HepG2 (cell line): ENCODE measurements at regions of chr6 and their contacts with region 1.

Region 1: DNA sequence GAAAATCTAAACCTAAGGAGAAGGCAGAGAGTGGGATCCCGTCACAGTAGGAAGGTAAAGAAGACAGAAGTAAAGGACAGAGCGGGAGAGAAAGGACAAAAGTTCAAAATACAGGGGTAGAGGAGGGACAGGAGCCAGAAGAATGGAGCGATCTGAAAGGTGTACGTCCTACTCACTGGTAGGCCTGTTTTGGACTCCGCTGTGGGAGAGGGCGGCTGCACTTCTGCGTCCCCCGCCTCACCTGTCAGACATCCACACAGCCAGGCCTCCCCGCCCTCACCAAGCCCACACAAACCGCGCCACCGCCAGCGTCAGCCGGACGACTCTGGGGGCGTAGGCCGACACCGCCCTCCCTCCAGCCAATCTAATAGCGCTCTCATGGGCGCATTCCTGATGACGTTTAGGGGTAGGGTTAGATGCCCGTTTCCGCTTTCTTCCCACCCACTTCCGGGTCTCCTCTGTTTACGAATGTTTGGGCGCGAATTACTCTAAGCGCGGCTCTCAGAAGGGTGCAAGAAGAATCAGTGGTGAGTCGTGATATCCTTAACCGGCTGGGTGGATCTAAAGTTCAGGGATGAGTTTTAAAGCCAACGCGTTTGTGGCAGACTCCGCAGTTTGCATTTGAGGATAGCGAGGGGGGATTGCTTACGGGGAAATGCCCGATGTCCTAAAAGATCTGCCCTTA is at the starts of genes CENPQ and MMUT:
- DNase-seq: peak; percentile 98
- ATAC-seq: peak; percentile 100
- H3K4me3 ChIP-seq: peak within 1 kb of the TSS; percentile 83 to 96 (median 91)
- H3K27ac ChIP-seq: peak within 1 kb of the TSS; percentile 85
- H3K4me1 ChIP-seq: peaks cover 36% of the 10 kb centered on the region
- H3K27me3 ChIP-seq: no peaks in the 10 kb centered on the region; a peak in 1 of 5 replicates
- CTCF ChIP-seq: peak; percentile 46
- EP300 ChIP-seq: peak; percentile 72 to 92
- POLR2A ChIP-seq: peak; percentile 84 to 87
- RAD21 ChIP-seq: no peak; the same call in 1 of the 2 replicates
- total RNA-seq, gene CENPQ: 20.1 and 29.4 TPM in 2 replicates
- total RNA-seq, gene MMUT: 15.8 and 20.5 TPM in 2 replicates

Region 2: DNA sequence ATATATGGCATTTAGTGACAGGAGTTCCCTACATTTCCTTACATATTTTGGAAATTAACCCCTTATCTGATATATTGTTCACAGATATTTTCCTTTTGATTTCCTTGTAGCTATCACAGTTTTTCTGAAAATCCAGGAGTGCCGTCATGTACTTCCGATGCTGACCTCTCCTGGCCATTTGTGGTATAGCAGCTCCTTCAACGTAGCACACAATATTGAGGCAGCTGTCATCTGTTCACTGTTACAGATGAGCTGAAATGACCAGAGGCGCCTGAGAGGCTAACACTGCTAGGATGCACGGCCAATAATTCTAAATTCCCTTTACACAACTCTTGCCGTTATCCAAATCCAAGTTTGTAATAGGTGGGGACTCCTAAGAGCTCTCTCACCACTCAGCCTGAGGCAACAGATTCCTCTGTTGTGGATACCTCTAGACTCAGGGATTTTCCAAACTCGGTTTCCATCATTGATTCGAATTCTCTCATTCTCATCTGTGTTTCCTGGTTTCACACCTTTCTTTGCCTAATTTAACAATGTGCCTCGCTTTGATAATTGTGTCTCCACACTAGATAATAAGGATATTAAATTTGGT is 53.0 kb before region 1 on chr6:
- CTCF ChIA-PET with region 1: no interaction called
- POLR2A ChIA-PET with region 1: no interaction called
- in situ Hi-C with region 1: no loop called
- intact Hi-C with region 1: loop called (anchors 1 kb)
- DNase-seq: peak; percentile 59
- ATAC-seq: peak; percentile 97
- H3K4me3 ChIP-seq: no peak overlapping the region
- H3K27ac ChIP-seq: no peak overlapping the region
- H3K4me1 ChIP-seq: no peaks in the 10 kb centered on the region
- H3K27me3 ChIP-seq: no peaks in the 10 kb centered on the region
- CTCF ChIP-seq: peak; percentile 85
- EP300 ChIP-seq: no peak
- POLR2A ChIP-seq: no peak
- RAD21 ChIP-seq: no peak

Region 3: DNA sequence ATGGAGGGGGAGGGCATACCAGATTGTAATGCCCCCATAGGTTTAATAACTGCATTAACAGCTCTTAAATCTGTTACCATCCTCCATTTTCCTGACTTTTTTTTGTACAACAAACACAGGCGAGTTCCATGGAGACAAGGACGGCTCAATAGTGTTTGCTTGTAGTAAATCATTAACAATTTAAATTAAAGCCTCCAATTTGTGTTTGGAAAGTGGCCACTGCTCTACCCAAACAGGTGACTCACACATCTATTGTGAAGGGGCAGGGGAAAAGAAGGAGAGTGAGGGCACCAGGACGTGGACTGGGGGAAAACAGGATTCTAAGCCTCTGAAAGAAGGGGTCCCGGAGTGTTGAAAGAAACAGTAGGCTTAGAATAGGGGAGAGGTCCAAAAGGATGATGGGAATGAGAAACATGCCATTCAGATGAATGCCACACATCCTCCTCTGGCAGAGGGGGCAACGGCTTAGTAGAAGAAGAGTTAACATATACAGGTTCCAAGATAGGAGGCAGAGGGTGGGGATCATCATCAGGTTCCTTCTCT is 43.6 kb after region 1 on chr6:
- CTCF ChIA-PET with region 1: no interaction called
- POLR2A ChIA-PET with region 1: no interaction called
- in situ Hi-C with region 1: no loop called
- intact Hi-C with region 1: loop called (anchors 1 kb)
- DNase-seq: peak; percentile 90
- ATAC-seq: peak; percentile 98
- H3K4me3 ChIP-seq: peak overlapping the region in 1 of 3 experiments; percentile 41; a peak in 3 of 6 replicates
- H3K27ac ChIP-seq: peak overlapping the region; percentile 85
- H3K4me1 ChIP-seq: peaks cover 42% of the 10 kb centered on the region
- H3K27me3 ChIP-seq: no peaks in the 10 kb centered on the region
- CTCF ChIP-seq: no peak
- EP300 ChIP-seq: peak; percentile 9 to 71; a peak in 2 of 4 replicates
- POLR2A ChIP-seq: peak in 1 of 2 experiments; percentile 22; a peak in 1 of 4 replicates
- RAD21 ChIP-seq: no peak

Region 4: GRCh38 chr6:49519660-49520059 is 56.6 kb after region 1 on chr6:
- CTCF ChIA-PET with region 1: no interaction called
- POLR2A ChIA-PET with region 1: no interaction called
- in situ Hi-C with region 1: no loop called
- intact Hi-C with region 1: loop called (anchors 1 kb)
- DNase-seq: no peak
- ATAC-seq: no peak
- H3K4me3 ChIP-seq: no peak overlapping the region
- H3K27ac ChIP-seq: no peak overlapping the region
- H3K4me1 ChIP-seq: peaks cover 57% of the 10 kb centered on the region
- H3K27me3 ChIP-seq: no peaks in the 10 kb centered on the region
- CTCF ChIP-seq: no peak
- EP300 ChIP-seq: no peak
- POLR2A ChIP-seq: no peak
- RAD21 ChIP-seq: no peak

Region 5: DNA sequence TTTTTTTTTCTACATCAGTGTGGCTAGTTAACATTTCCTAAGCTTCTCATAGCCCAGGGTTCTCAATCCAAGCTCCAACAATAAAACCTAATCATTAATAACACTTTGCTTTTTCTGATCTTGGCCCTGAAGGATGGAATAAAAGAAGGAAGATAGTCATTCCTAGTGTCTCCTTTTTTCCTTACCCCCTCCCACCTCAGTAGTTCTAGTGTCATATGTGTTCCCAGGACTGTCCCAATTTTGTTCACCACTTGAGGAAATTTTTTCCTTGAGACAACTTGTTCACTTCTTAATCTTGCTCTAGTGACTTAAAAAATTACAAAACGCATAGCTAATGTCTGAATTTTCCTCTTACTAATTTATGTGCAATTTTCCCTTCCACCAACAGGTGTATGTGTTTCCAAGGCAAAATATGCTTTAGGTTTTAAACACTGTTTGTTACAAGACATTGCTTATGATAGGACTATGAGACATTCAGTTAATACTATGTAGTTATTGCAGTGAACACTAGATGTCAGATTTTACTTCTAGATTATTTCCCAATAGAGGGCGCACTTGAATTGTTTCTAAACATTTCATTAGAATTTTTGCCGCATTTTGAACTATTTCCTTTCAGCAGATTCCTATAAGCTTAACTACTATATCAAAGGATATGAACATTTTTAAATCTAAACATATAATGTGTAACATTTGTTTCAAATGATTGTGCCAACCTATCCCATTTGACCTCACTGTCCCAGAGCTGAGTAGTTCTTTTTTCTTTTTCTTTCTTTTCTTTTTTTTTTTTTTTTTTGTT is 68.9 kb after region 1 on chr6:
- CTCF ChIA-PET with region 1: no interaction called
- POLR2A ChIA-PET with region 1: no interaction called
- in situ Hi-C with region 1: no loop called
- intact Hi-C with region 1: loop called (anchors 2 kb)
- DNase-seq: peak; percentile 72
- ATAC-seq: peak; percentile 98
- H3K4me3 ChIP-seq: peak overlapping the region; percentile 24 to 41 (median 40)
- H3K27ac ChIP-seq: no peak overlapping the region
- H3K4me1 ChIP-seq: peaks cover 16% of the 10 kb centered on the region
- H3K27me3 ChIP-seq: no peaks in the 10 kb centered on the region
- CTCF ChIP-seq: peak; percentile 83
- EP300 ChIP-seq: peak in 1 of 2 experiments; percentile 3; a peak in 1 of 4 replicates
- POLR2A ChIP-seq: no peak
- RAD21 ChIP-seq: peak; percentile 85

Region 6: GRCh38 chr6:49606696-49607390 is 143.8 kb after region 1 on chr6:
- CTCF ChIA-PET with region 1: no interaction called
- POLR2A ChIA-PET with region 1: no interaction called
- in situ Hi-C with region 1: loop called (anchors 5 kb)
- intact Hi-C with region 1: loop called (anchors 2 kb)
- DNase-seq: peak; percentile 91
- ATAC-seq: peak; percentile 88
- H3K4me3 ChIP-seq: no peak overlapping the region
- H3K27ac ChIP-seq: no peak overlapping the region
- H3K4me1 ChIP-seq: 0 out of 2 replicates have a peak, but pooled peaks cover 5% of the 10 kb centered on the region
- H3K27me3 ChIP-seq: 0 out of 5 replicates have a peak, but pooled peaks cover 0 to 5% of the 10 kb centered on the region in 2 experiments
- CTCF ChIP-seq: peak; percentile 94
- EP300 ChIP-seq: no peak
- POLR2A ChIP-seq: no peak
- RAD21 ChIP-seq: peak; percentile 71; the same call in 1 of the 2 replicates

Region 7: DNA sequence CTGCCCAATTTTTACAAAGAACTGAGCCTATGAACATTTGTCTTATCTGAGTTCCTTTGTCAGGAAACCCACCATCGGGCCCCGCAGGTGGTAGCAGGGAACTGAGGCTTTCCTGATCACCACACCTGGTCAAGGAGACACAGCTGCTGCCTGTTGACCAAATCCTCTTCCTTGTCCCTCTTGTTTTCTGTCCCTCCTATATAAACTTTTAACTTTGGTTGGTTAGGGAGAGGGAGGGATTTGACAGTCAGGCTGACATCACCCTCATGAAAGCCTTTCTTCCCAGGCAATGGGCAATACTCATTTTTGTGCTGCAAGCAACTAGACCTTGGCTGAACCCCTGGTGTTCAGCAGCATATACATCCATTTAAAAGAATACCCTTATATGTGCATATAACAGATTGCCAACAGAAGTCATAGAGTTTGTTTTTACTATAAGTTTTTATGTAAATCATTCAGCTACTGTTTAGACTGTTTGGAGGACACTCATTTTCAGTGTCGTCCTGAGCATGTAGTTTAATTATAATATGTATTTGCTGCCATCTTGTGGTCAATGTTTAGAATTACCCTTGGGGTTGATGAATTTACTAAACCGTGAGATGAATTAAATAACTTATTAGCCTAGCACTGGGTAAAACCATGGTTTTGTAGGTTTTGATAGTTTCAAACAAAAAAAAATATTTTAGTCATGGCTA is 386.3 kb after region 1 on chr6:
- CTCF ChIA-PET with region 1: no interaction called
- POLR2A ChIA-PET with region 1: no interaction called
- in situ Hi-C with region 1: no loop called
- intact Hi-C with region 1: loop called (anchors 2 kb)
- DNase-seq: peak; percentile 64
- ATAC-seq: peak; percentile 93
- H3K4me3 ChIP-seq: no peak overlapping the region
- H3K27ac ChIP-seq: no peak overlapping the region
- H3K4me1 ChIP-seq: no peaks in the 10 kb centered on the region
- H3K27me3 ChIP-seq: no peaks in the 10 kb centered on the region
- CTCF ChIP-seq: peak; percentile 77
- EP300 ChIP-seq: no peak
- POLR2A ChIP-seq: no peak
- RAD21 ChIP-seq: peak; percentile 54

Region 8: GRCh38 chr6:50305660-50306059 is 842.6 kb after region 1 on chr6:
- CTCF ChIA-PET with region 1: no interaction called
- POLR2A ChIA-PET with region 1: no interaction called
- in situ Hi-C with region 1: no loop called
- intact Hi-C with region 1: no loop called
- DNase-seq: peak; percentile 2
- ATAC-seq: no peak
- H3K4me3 ChIP-seq: no peak overlapping the region
- H3K27ac ChIP-seq: no peak overlapping the region
- H3K4me1 ChIP-seq: no peaks in the 10 kb centered on the region
- H3K27me3 ChIP-seq: no peaks in the 10 kb centered on the region
- CTCF ChIP-seq: no peak
- EP300 ChIP-seq: no peak
- POLR2A ChIP-seq: no peak
- RAD21 ChIP-seq: no peak